H1 (cell line): ENCODE measurements at regions of chr12 and their contacts with region 1.

Region 1: GRCh38 chr12:32671930-32672780 is 6.9 kb upstream of the DNM1L start:
- DNase-seq: no peak
- H3K4me3 ChIP-seq: no peak overlapping the region
- H3K27ac ChIP-seq: no peak overlapping the region
- H3K4me1 ChIP-seq: no peaks in the 10 kb centered on the region
- H3K27me3 ChIP-seq: no peaks in the 10 kb centered on the region
- CTCF ChIP-seq: peak in 2 of 3 experiments; percentile 67 to 83; a peak in 3 of 4 replicates
- EP300 ChIP-seq: no peak
- POLR2A ChIP-seq: no peak
- RAD21 ChIP-seq: peak; percentile 91

Region 2: DNA sequence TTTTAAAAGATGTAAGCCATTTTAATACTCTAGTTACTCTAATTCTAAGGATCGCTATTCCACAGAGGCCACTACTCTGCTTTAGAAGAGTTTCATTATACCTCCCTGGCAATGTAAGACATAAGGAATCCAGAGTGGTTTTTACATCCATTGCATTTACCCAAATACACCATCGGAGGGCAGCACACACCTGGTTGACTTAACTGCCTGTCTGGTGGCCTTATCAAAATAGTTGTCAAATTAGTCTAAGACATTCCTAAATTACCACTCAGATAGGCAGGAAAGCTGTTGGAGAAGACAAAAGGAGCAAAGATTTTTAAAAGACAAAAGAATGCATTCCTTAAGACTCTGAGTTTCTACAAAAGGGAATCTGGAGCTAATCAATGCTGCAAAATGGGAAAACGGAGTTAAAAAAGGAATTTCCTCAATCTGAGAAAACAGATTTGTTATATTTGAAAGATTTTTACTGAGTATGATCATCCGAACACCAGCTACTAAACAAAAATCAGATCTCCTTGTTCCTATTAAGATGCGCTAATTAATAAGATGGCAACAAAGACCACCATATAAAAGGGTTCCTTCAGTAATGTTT is 306.6 kb before region 1 on chr12:
- CTCF ChIA-PET with region 1: interaction called, 39 read pairs
- POLR2A ChIA-PET with region 1: interaction called, 4 read pairs
- DNase-seq: peak in 1 of 2 experiments; percentile 29
- H3K4me3 ChIP-seq: no peak overlapping the region
- H3K27ac ChIP-seq: no peak overlapping the region
- H3K4me1 ChIP-seq: peaks cover 0 to 9% (median 6%) of the 10 kb centered on the region in 4 experiments; a peak in 4 of 7 replicates
- H3K27me3 ChIP-seq: no peaks in the 10 kb centered on the region
- CTCF ChIP-seq: peak in 2 of 3 experiments; percentile 78 to 84; a peak in 3 of 4 replicates
- EP300 ChIP-seq: no peak
- POLR2A ChIP-seq: no peak
- RAD21 ChIP-seq: peak; percentile 95 to 98

Region 3: GRCh38 chr12:32455607-32456071 is 216.5 kb before region 1 on chr12:
- CTCF ChIA-PET with region 1: interaction called, 15 read pairs
- POLR2A ChIA-PET with region 1: no interaction called
- DNase-seq: no peak
- H3K4me3 ChIP-seq: peak overlapping the region in 1 of 4 experiments; percentile 50; a peak in 2 of 8 replicates
- H3K27ac ChIP-seq: peak overlapping the region; percentile 57; the same call in 1 of the 2 replicates
- H3K4me1 ChIP-seq: peaks cover 2 to 21% (median 11%) of the 10 kb centered on the region in 4 experiments
- H3K27me3 ChIP-seq: no peaks in the 10 kb centered on the region
- CTCF ChIP-seq: peak in 2 of 3 experiments; percentile 28 to 55; a peak in 2 of 4 replicates
- EP300 ChIP-seq: no peak
- POLR2A ChIP-seq: no peak
- RAD21 ChIP-seq: peak; percentile 57 to 72

Region 4: GRCh38 chr12:32627976-32628375 is 44.2 kb before region 1 on chr12:
- CTCF ChIA-PET with region 1: interaction called, 14 read pairs
- POLR2A ChIA-PET with region 1: no interaction called
- DNase-seq: no peak
- H3K4me3 ChIP-seq: no peak overlapping the region
- H3K27ac ChIP-seq: no peak overlapping the region
- H3K4me1 ChIP-seq: no peaks in the 10 kb centered on the region
- H3K27me3 ChIP-seq: no peaks in the 10 kb centered on the region
- CTCF ChIP-seq: no peak
- EP300 ChIP-seq: no peak
- POLR2A ChIP-seq: no peak
- RAD21 ChIP-seq: no peak

Region 5: GRCh38 chr12:32647275-32647674 is 24.9 kb before region 1 on chr12:
- CTCF ChIA-PET with region 1: interaction called, 16 read pairs
- POLR2A ChIA-PET with region 1: no interaction called
- DNase-seq: peak in 1 of 2 experiments; percentile 33
- H3K4me3 ChIP-seq: no peak overlapping the region
- H3K27ac ChIP-seq: no peak overlapping the region
- H3K4me1 ChIP-seq: no peaks in the 10 kb centered on the region
- H3K27me3 ChIP-seq: no peaks in the 10 kb centered on the region
- CTCF ChIP-seq: peak in 1 of 3 experiments; percentile 3; a peak in 1 of 4 replicates
- EP300 ChIP-seq: no peak
- POLR2A ChIP-seq: no peak
- RAD21 ChIP-seq: peak in 1 of 2 experiments; percentile 8; a peak in 1 of 4 replicates

Region 6: DNA sequence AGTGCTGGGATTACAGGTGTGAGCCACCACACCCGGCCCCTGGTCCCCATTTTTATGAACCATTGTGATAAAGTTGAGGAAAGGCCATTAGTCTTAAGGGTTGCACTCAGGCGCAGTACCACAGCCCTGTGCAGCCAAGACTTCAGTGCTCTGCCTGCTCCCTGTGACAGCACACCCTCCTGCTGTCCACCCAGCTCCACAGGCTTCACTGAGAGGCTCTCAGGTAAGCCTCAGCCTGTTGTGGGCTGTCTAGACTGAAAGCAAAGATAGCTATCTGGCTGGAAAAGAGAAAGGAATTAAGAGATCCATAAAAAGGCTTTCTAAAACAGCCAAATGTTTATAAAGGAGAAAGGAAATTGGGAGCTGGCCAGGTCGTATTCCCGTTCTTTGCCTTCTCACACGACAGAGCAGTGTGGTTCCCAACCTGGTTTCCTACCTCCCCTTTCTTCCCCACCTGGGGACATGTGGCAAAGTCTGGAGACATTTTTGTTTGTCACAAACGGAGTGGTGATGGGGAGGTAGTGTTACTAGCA is 12.2 kb before region 1 on chr12:
- CTCF ChIA-PET with region 1: interaction called, 63 read pairs
- POLR2A ChIA-PET with region 1: interaction called, 4 read pairs
- DNase-seq: peak in 1 of 2 experiments; percentile 43
- H3K4me3 ChIP-seq: no peak overlapping the region
- H3K27ac ChIP-seq: no peak overlapping the region
- H3K4me1 ChIP-seq: 0 out of 7 replicates have a peak, but pooled peaks cover 0 to 1% (median 0%) of the 10 kb centered on the region in 4 experiments
- H3K27me3 ChIP-seq: 0 out of 7 replicates have a peak, but pooled peaks cover 0 to 1% (median 0%) of the 10 kb centered on the region in 4 experiments
- CTCF ChIP-seq: no peak
- EP300 ChIP-seq: no peak
- POLR2A ChIP-seq: no peak
- RAD21 ChIP-seq: no peak

Region 7: DNA sequence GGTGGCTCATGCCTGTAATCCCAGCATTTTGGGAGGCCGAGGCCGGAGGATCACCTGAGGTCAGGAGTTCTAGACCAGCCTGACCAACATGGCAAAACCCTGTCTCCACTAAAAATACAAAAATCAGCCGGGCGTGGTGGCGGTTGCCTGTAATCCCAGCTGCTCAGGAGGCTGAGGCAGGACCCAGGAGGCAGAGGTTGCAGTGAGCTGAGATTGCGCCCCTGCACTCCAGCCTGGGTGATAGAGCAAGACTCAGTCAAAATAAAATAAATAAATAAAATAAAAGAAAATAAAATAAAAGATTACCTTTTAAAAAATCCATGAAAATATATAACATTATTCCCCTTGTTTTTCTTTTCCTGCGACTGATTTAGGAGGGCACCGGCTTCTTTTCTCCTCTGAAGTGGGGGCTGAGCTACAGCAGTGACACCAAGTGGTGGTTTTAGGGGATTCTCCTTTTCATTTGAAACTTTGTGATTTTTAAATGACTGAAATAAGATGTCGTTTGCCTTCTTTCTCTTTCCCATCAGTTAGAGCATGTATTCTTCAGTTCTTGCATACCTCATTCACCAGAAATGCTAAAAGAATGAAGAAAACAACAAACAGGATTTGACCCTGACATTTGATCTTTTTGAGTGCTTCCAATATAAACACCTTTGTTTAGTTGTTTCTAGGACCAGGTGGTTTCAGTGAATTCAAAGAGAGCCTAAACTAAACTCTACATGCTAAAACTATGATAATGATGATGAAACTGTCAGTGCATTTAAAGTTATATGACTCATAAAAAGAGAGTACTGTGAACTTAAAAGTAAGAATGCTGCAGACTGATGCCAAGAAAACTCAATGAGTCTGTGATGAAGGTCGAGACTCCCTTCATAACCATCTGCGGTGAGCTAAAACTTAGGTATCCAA is 247.0 kb after region 1 on chr12:
- CTCF ChIA-PET with region 1: no interaction called
- POLR2A ChIA-PET with region 1: no interaction called
- DNase-seq: no peak
- H3K4me3 ChIP-seq: no peak overlapping the region
- H3K27ac ChIP-seq: no peak overlapping the region
- H3K4me1 ChIP-seq: no peaks in the 10 kb centered on the region
- H3K27me3 ChIP-seq: no peaks in the 10 kb centered on the region
- CTCF ChIP-seq: peak; percentile 7 to 65 (median 55)
- EP300 ChIP-seq: no peak
- POLR2A ChIP-seq: no peak
- RAD21 ChIP-seq: peak; percentile 85 to 87